Vagina (tissue), 2 donors: ENCODE measurements at regions of chr6 and their contacts with region 1.

Region 1: GRCh38 chr6:74735304-74735703 is 470.5 kb downstream of the COL12A1 start:
- DNase-seq: no peak
- H3K4me3 ChIP-seq: no peak overlapping the region
- H3K27ac ChIP-seq: no peak overlapping the region
- H3K4me1 ChIP-seq: no peaks in the 10 kb centered on the region
- H3K27me3 ChIP-seq: no peaks in the 10 kb centered on the region
- CTCF ChIP-seq: no peak
- POLR2A ChIP-seq: no peak

Region 2: DNA sequence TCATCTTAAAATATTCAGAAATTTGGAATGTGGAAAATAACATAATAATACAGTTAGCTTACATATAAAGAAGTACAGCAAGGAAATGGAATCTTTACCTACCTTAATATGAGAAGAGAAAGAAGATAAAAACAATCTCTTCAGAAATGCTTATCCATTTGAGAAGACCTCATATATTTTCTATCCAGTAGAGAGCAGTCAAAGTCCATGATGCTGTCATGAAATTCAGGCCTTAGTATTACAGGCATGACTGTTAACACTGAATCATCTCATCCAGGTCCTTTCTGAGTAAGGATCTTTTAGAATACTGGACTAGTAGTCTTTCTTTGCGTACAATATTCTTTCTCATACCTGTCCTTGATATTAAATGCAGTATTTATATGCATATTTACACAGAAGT is 325.9 kb before region 1 on chr6:
- intact Hi-C with region 1: loop called (anchors 5 kb)
- DNase-seq: no peak
- H3K4me3 ChIP-seq: no peak overlapping the region
- H3K27ac ChIP-seq: no peak overlapping the region
- H3K4me1 ChIP-seq: no peaks in the 10 kb centered on the region
- H3K27me3 ChIP-seq: no peaks in the 10 kb centered on the region
- CTCF ChIP-seq: peak in 1 of 3 experiments; percentile 29
- POLR2A ChIP-seq: no peak